ENCODE measurements at regions of chr12 and their contacts with region 1.

Region 1: DNA sequence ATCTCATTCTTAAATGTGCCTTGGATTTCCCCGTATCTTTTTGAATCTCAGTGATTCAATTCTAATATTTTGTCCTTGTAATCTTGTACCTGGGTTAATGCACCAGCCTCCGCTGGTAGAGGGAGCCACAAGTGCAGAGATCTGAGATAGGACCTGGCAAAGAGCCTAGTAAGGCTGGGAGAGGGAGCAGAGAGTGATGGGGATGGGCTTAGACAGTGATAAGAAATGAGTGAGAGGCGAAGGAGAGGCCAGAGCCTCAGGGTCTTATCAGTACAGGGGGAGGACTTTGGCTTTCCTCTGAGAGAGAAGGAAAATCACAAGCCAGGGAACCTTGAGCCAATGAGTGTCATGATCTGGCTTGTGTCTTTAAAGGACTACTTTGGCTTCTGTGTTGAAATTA is 30.5 kb upstream of the LMNTD1 start:
- DNase-seq: peak; percentile 33 to 72 (median 52)
- ATAC-seq: peak; percentile 93 to 97
- H3K4me3 ChIP-seq: no peak overlapping the region
- H3K27ac ChIP-seq: peak overlapping the region; percentile 30
- H3K4me1 ChIP-seq: peaks cover 2% of the 10 kb centered on the region
- H3K27me3 ChIP-seq: no peaks in the 10 kb centered on the region

Region 2: GRCh38 chr12:25796523-25797000 is 213.0 kb after region 1 on chr12:
- intact Hi-C with region 1: loop called in 1 of 4 experiments (anchors 10 kb)
- DNase-seq: peak in 1 of 3 donors; percentile 17
- ATAC-seq: peak; percentile 91
- H3K4me3 ChIP-seq: no peak overlapping the region
- H3K27ac ChIP-seq: peak overlapping the region; percentile 43
- H3K4me1 ChIP-seq: peaks cover 3% of the 10 kb centered on the region
- H3K27me3 ChIP-seq: no peaks in the 10 kb centered on the region

Region 3: DNA sequence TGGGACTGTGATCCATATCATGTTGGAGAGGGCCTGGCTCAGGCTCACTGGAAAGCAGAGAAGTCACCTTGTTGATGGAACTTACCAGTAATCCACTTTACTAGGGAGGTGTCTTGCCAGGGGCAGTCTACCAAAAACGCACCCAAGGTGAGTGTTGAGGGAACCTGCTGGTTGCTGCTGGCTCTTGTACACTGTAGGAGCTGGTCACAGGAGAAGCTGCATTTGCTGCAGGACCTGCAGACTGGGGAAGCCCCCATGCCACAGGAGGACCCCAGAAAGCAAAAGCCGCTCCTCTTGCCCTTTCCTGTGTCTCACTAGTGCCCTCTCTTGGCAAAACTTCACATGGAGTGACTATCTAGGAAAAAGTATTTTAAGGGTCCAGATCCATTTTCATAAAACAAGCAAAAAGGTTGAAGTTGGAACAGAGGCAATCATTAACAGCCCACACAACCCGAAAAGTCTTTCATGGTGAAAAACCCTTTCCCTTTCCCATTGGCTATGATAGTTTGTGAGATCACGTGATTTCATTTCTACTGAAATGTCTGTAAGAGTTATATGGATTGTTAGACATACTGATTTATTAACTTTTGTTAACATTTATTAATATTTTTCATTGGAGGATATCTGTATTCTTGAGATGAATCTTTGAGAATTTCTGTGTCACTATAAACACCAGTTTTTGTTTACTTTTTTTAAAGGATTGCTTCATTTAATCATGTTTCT is 434.1 kb after region 1 on chr12:
- intact Hi-C with region 1: loop called in 1 of 4 experiments (anchors 10 kb)
- DNase-seq: no peak
- ATAC-seq: peak; percentile 44 to 51
- H3K4me3 ChIP-seq: no peak overlapping the region
- H3K27ac ChIP-seq: no peak overlapping the region
- H3K4me1 ChIP-seq: peaks cover 14% of the 10 kb centered on the region
- H3K27me3 ChIP-seq: no peaks in the 10 kb centered on the region

Region 4: DNA sequence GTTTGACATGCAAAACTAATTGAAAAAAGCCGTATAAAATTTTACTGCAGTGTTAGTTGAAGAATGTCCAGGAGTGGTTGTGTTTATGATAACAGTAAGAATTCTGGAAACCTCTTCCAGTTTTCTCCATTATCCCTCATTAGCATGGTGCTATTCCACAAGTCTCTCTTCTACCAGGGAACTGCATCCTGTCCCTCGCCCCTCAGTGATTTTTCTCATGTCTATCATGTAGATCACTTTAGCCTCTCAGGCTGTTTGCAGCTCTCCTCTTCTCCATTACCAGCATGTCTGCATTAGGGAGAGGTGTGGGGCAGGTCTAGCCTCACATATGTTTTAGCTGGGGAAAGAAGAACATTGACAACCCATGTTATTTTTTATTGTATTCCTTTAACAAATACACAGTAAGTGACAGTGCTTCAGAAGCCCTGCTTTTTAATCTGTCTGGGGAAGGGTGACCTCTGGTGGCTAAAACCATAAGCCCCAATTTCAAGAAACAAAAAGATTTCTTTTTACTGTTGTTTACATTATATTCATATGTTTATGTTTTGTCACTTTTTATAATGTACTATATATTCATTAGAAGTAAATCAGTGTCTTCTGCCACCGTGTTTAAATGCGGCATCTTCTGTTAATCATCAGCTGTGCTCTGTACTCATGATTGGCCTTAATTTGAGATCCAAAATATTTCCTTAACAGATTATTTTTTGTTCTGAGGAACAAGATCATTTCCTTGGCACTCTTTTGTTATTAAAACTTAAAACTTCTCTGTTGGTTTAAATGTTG is 445.6 kb after region 1 on chr12:
- intact Hi-C with region 1: loop called in 1 of 4 experiments (anchors 10 kb)
- DNase-seq: no peak
- ATAC-seq: peak; percentile 56 to 71
- H3K4me3 ChIP-seq: no peak overlapping the region
- H3K27ac ChIP-seq: no peak overlapping the region
- H3K4me1 ChIP-seq: peaks cover 6% of the 10 kb centered on the region
- H3K27me3 ChIP-seq: no peaks in the 10 kb centered on the region